ENCODE measurements at regions of chr10 and their contacts with region 1.

Region 1: GRCh38 chr10:7872041-7872442 is 53.7 kb downstream of the TAF3 start:
- DNase-seq: no peak
- ATAC-seq: peak; percentile 32

Region 2: DNA sequence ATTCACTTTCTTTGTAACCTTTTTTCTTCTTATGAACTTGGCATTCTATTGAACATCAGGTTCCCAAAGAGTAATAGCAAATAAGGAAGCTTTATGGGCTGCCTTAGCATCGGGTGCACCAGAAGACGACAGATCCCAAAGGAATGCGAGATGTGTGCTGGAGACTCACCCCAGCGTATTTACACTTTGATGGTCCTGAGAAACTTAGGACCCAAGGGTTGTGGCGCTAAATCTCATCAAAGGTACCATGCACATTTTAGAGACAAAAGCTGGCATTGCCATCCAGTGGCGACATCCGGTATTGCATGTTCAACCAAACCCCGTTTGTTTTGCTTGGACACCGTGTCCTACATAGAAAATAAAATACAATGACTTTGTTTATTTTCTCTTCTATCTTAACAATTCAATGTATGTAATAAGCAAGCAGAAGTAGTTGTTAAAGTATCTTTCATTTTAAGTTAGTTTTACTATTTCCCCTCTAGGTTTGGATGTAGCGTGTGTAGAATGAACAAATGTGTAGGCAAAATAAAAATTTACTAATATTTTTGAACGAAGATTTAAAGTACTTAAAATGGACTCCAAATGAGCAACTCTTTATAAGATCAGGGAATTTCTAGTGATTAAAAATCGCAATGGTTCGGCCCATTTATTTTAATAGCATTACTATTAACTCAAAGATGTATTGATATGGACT is 1337.2 kb after region 1 on chr10:
- intact Hi-C with region 1: loop called (anchors 5 kb)
- DNase-seq: peak; percentile 78
- ATAC-seq: no peak